ENCODE measurements at regions of chr2 and their contacts with region 1.

Region 1: GRCh38 chr2:202109737-202110184 is 36.7 kb downstream of the KIAA2012 start:
- DNase-seq: peak; percentile 58
- ATAC-seq: peak; percentile 59
- H3K4me3 Mint-ChIP-seq: no peak overlapping the region
- H3K27ac Mint-ChIP-seq: no peak overlapping the region
- H3K4me1 Mint-ChIP-seq: peaks cover 30% of the 10 kb centered on the region
- H3K27me3 Mint-ChIP-seq: peaks cover 3% of the 10 kb centered on the region; the same call in 1 of the 2 replicates
- CTCF ChIP-seq: no peak

Region 2: DNA sequence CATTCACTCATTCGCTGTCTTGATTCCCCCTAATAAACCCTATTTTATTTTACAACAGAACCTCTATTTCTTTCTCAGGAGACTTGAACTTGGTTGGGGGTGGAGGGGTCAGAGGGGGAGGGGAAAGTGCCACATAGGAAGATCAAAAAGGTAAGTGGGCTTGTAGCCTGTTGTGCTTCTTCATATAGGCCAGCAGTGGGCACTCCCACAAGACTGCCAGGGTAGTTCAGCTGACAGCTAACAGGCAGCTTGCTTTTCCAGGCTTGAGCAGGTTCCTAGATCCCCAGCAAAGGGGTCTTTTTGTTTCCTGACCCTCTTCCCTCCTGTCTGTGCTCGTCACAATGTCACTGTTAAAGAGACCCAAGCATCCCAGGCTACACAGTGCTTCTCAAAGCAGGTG is 37.5 kb before region 1 on chr2:
- CTCF ChIA-PET with region 1: interaction called, 13 read pairs
- POLR2A ChIA-PET with region 1: no interaction called
- DNase-seq: no peak
- ATAC-seq: peak; percentile 77
- H3K4me3 Mint-ChIP-seq: no peak overlapping the region
- H3K27ac Mint-ChIP-seq: no peak overlapping the region
- H3K4me1 Mint-ChIP-seq: peaks cover 15% of the 10 kb centered on the region
- H3K27me3 Mint-ChIP-seq: no peaks in the 10 kb centered on the region; the same call in 1 of the 2 replicates
- CTCF ChIP-seq: 0 out of 2 replicates have a peak, but pooled peaks have one; percentile 25

Region 3: DNA sequence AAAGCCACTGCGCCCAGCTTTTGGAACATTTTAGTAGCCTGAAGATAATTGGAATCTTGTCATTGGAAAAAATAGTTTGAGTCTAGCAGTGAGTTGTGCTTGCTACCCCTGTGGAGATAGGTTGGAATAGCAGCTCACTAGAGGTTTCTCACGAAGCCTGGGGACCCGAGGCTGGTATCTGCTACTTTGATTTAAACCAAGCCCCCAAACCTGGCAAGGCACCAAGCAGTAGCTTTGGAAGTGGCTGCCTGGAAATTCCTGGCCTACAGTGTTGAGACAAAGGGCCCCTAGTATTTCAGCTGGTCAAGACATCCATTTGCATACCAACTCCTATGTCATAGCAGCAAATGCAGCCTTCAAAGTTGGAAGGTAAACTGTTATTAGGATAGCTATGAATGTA is 197.9 kb after region 1 on chr2:
- CTCF ChIA-PET with region 1: no interaction called
- POLR2A ChIA-PET with region 1: no interaction called
- DNase-seq: peak; percentile 26
- ATAC-seq: peak; percentile 56
- H3K4me3 Mint-ChIP-seq: no peak overlapping the region
- H3K27ac Mint-ChIP-seq: no peak overlapping the region; the same call in 1 of the 2 replicates
- H3K4me1 Mint-ChIP-seq: 0 out of 2 replicates have a peak, but pooled peaks cover 2% of the 10 kb centered on the region
- H3K27me3 Mint-ChIP-seq: no peaks in the 10 kb centered on the region
- CTCF ChIP-seq: no peak